ENCODE measurements at regions of chr6 and their contacts with region 1.

Region 1: DNA sequence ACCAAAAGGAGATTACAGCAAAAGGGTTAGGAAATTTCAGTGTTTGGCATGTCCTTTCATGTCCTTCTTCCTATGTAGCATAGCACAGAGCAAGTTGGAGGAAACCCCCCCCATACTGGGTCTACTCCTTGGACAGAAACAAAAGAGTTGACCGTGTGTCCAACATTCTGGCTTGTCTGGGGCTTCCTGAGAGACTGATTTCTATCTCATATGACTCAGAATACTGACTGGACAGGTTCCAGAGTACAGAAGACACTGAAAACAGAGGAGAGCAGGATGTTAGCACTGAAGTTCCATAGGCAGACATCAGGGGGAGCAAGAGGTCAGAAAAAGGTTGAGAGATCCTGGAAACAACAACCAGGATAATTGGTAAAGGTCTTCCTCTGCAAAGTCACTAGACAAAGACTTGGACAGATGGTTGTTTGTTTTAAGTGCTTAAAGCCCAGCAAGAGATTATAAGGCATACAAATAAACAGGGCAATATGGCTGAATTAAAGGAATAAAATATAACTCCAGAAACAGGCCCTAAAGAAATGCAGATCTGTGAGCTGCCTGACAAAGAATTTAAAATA is 48.4 kb downstream of the USP49 start:
- DNase-seq: peak; percentile 70
- CTCF ChIP-seq: peak; percentile 61

Region 2: GRCh38 chr6:41836022-41836659 is 10.6 kb before region 1 on chr6:
- CTCF ChIA-PET with region 1: interaction called, 13 read pairs
- POLR2A ChIA-PET with region 1: no interaction called
- DNase-seq: no peak
- CTCF ChIP-seq: no peak

Measured in GM10248 (cell line).